Activated T-helper 2 cell treated with anti-CD3 and anti-CD28 coated beads, Interferon-gamma antibody, Interleukin-2, Interleukin-4, amounts not matched to agents 10 μg/mL and 5 μg/mL and 100 μg/mL, durations not matched to agents 14 hours and 24 hours and 36 hours (primary cell): ENCODE measurements at regions of chr9 and their contacts with region 1.

Region 1: DNA sequence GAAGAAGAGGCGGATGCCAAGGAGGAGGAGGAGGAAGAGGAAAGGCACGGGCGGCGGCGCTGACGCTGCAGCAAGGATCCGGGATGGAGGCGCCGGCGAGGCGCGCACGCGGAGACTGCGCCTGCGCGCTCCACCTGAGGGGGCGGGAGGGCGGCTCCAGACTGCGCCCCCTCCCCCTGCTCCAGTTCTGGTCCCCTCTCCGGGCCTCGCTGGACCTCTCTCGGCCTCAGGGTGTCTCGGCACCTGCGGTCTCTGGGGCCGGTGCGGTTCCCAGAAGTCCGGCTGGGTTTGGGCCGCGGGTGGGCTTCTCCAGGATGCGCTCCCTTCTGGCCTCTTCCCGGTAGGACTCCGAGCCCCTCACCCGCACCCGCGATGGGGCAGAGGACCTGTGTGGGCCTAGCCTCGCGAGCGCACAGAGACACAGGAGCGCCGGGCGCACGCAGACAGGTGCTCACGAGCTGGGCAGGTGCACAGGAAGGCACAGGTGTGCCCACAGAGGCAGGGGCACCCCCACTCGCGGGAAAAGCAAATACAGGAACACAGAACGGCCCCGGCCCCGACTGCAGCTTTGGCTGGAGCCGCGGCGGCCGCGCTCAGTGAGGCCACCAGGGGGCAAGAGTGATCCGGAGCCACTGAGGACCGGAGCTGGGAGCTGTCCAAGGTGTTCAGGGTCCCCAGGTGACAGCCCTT is at the start of gene NPDC1:
- DNase-seq: peak; percentile 76
- H3K4me3 Mint-ChIP-seq: peak within 1 kb of the TSS; percentile 60
- H3K27ac Mint-ChIP-seq: no peak within 1 kb of the TSS
- H3K4me1 Mint-ChIP-seq: peaks cover 4% of the 10 kb centered on the region
- H3K27me3 Mint-ChIP-seq: peaks cover 29% of the 10 kb centered on the region
- total RNA-seq, gene NPDC1: 32.7 and 36.0 TPM in 2 replicates

Region 2: DNA sequence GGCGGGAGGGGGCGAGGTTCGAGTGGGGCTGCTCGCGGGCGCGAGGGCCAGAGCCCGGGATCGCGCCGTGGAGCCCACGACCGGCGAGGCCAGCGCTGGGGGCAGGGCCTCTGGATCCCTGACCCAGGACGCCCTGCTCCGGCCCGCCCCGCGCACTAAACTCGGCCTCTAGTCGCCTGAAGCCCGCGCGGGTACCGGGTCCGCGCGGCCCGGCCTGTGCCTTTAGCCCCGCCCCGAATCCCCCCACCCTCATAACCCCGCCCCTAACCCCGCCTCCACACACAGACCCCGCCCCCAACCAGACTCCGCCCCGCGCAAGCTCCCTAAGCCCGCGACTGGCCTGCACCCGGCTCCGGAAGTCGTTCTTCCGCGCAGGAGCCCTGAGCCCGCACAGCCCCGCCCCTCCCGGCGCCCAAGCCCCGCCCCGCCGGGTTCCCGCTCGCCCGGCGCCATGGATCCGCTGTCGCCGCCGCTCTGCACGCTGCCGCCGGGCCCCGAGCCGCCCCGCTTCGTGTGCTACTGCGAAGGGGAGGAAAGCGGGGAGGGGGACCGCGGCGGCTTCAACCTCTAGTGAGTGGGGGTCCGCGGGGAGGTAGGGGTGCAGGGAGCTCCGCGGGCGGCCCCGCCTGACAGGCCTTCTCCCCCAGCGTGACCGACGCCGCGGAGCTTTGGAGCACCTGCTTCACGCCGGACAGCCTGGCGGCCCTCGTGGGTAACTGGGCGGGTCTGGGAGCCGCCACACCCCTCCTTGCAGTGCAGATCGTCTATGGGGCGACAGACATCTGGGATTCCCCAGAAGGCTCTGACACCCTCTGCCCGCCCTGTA is 54.0 kb before region 1 on chr9 and contains the start of gene PAXX:
- intact Hi-C with region 1: no loop called
- DNase-seq: peak; percentile 93
- H3K4me3 Mint-ChIP-seq: peak within 1 kb of the TSS; percentile 83
- H3K27ac Mint-ChIP-seq: peak within 1 kb of the TSS; percentile 77
- H3K4me1 Mint-ChIP-seq: peaks cover 10% of the 10 kb centered on the region
- H3K27me3 Mint-ChIP-seq: peaks cover 17% of the 10 kb centered on the region
- total RNA-seq, gene PAXX: 60.5 and 72.6 TPM in 2 replicates

Region 3: DNA sequence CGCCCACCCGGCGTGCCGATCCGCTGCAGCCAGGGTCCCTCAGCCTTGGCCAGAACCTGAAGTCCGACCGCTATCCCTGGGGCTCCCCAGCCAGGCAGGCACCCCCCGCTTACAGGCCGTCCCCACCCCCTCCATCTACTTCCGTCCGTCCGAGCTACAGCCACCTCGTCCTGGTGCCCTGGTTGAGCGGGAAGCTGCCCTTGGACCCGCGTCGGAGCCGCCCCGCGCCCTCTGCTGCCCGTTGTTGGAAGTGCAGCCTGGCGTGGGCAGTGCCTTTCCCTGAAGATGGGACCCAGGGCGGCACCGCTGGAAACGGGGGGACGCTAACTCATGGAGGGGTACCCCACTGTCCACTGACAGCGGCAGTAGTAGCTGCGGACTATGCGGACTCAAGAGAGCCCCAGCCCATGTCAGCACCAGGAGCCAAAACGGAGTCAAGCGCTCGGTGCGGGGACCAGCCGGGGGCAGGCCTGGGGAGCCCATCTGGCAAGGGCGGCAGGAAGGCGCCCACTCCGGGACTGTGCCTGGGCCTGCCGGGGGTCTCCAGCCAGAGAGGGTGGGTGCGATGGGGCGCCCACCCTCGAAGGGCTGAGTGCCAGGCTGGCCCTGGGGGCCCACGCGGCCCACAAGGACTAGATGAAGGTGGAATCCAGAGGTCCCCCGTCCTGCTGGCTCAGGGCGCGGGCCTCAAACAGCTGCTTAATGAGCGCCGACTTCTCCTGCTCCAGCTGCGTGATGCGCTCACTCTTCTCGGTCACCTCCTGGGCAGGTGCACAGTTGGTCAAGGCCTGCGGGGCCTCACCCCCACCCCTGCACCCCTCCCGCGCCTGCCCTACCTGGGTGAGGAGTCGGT is 18.0 kb after region 1 on chr9:
- intact Hi-C with region 1: loop called (anchors 1 kb)
- DNase-seq: peak; percentile 43
- H3K4me3 Mint-ChIP-seq: no peak overlapping the region
- H3K27ac Mint-ChIP-seq: no peak overlapping the region
- H3K4me1 Mint-ChIP-seq: peaks cover 10% of the 10 kb centered on the region
- H3K27me3 Mint-ChIP-seq: no peaks in the 10 kb centered on the region

Region 4: GRCh38 chr9:137070201-137070905 is 24.1 kb after region 1 on chr9 and contains the start of gene SAPCD2:
- intact Hi-C with region 1: loop called (anchors 1 kb)
- DNase-seq: peak; percentile 87
- H3K4me3 Mint-ChIP-seq: peak within 1 kb of the TSS; percentile 83
- H3K27ac Mint-ChIP-seq: peak within 1 kb of the TSS; percentile 72
- H3K4me1 Mint-ChIP-seq: peaks cover 18% of the 10 kb centered on the region
- H3K27me3 Mint-ChIP-seq: no peaks in the 10 kb centered on the region
- total RNA-seq, gene SAPCD2: 26.5 and 27.1 TPM in 2 replicates

Region 5: DNA sequence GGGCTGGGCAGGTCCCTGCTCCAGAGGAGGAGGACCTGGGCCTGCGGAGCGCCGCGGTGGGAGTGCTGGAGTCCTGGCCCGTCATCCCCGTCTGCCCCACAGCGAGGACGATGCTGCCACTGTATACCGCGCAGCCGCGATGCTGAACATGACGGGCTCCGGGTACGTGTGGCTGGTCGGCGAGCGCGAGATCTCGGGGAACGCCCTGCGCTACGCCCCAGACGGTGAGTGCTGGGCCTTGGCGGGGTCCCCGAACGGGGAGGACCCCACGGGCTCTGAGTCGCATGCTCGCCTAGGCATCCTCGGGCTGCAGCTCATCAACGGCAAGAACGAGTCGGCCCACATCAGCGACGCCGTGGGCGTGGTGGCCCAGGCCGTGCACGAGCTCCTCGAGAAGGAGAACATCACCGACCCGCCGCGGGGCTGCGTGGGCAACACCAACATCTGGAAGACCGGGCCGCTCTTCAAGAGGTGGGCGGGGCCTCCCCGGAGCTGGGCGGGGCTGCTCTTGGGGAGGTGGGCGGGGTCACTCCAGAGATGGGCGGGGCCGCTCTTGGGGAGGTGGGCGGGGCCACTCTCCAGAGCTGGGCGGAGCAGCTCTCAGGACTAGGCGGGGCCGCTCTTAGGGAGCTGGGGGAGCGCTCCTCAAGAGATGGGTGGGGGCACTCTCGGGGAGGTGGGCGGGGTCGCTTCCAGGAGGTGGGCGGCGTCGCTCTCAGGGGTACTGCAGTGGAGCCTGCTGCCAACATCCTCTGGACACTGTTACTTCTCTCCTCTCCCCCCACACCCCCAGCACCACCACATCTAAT is 110.5 kb after region 1 on chr9:
- intact Hi-C with region 1: loop called (anchors 5 kb)
- DNase-seq: peak; percentile 43
- H3K4me3 Mint-ChIP-seq: peak overlapping the region; percentile 54
- H3K27ac Mint-ChIP-seq: no peak overlapping the region
- H3K4me1 Mint-ChIP-seq: no peaks in the 10 kb centered on the region
- H3K27me3 Mint-ChIP-seq: peaks cover 34% of the 10 kb centered on the region